Sigmoid colon (tissue), 7 donors: ENCODE measurements at regions of chr15 and their contacts with region 1.

Region 1: GRCh38 chr15:70355275-70355795 is 257.6 kb upstream of the TLE3 start:
- DNase-seq: no peak
- H3K4me3 ChIP-seq: no peak overlapping the region
- H3K27ac ChIP-seq: no peak overlapping the region
- H3K4me1 ChIP-seq: peaks cover 0 to 7% (median 3%) of the 10 kb centered on the region in 4 donors
- H3K27me3 ChIP-seq: no peaks in the 10 kb centered on the region
- CTCF ChIP-seq: no peak
- EP300 ChIP-seq: no peak
- POLR2A ChIP-seq: no peak

Region 2: GRCh38 chr15:69583626-69584025 is 771.7 kb before region 1 on chr15:
- intact Hi-C with region 1: loop called (anchors 10 kb)
- DNase-seq: no peak
- H3K4me3 ChIP-seq: no peak overlapping the region
- H3K27ac ChIP-seq: no peak overlapping the region
- H3K4me1 ChIP-seq: no peaks in the 10 kb centered on the region
- H3K27me3 ChIP-seq: no peaks in the 10 kb centered on the region
- CTCF ChIP-seq: no peak
- EP300 ChIP-seq: no peak
- POLR2A ChIP-seq: no peak